ENCODE measurements at regions of chr15 and their contacts with region 1.

Region 1: GRCh38 chr15:52179278-52180195 is 11.7 kb downstream of the GNB5 start:
- DNase-seq: peak; percentile 93
- ATAC-seq: peak; percentile 89
- H3K4me3 Mint-ChIP-seq: peak overlapping the region; percentile 82
- H3K27ac Mint-ChIP-seq: peak overlapping the region; percentile 97
- H3K4me1 Mint-ChIP-seq: peaks cover 22% of the 10 kb centered on the region
- H3K27me3 Mint-ChIP-seq: no peaks in the 10 kb centered on the region

Region 2: DNA sequence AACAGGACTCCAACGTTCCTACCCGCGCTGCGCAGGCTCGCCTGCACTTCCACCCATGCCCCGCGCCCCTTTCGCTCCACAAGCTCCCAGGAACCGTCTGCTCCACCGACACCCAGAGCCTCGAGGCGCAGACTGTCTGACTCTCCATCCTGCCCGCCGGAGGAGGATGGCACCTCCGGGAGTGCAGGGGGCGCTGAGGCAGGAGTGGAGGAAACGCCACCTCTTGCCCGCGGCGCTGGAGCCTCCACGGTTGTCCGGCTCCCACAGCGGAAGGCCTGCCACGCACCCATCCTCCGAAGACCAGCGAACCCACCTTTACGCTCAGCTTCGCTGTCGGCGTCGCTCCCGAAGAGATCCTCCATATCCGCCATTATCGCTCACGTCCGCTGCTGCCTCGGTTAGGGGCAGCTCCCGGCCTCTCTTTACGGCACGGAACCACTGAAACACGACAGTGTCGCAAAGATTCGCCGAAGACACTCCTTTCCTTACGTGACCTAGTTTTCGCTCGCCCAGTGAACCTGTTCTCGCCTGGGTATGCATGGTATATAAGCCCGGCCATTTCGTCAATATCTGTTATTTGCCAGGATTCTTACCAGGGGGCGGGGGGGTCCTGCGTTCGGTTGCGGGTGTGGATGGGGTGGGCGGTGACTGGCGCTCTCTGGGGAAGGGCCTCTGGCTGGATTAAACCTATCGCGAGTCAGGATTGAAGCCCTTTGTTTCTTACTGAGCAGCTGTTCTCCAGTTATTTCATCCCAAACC is 208.0 kb before region 1 on chr15 and contains the start of gene LEO1:
- CTCF ChIA-PET with region 1: interaction called, 6 read pairs
- POLR2A ChIA-PET with region 1: interaction called, 5 read pairs
- intact Hi-C with region 1: loop called (anchors 1 to 5 kb)
- DNase-seq: peak; percentile 93
- ATAC-seq: peak; percentile 95
- H3K4me3 Mint-ChIP-seq: peak within 1 kb of the TSS; percentile 100
- H3K27ac Mint-ChIP-seq: peak within 1 kb of the TSS; percentile 94
- H3K4me1 Mint-ChIP-seq: peaks cover 21% of the 10 kb centered on the region
- H3K27me3 Mint-ChIP-seq: no peaks in the 10 kb centered on the region
- total RNA-seq, gene LEO1: 31.4 to 40.0 TPM

Region 3: GRCh38 chr15:52163321-52164190 is 16.0 kb before region 1 on chr15:
- CTCF ChIA-PET with region 1: interaction called, 10 read pairs
- POLR2A ChIA-PET with region 1: no interaction called
- intact Hi-C with region 1: no loop called
- DNase-seq: peak; percentile 36
- ATAC-seq: peak; percentile 49
- H3K4me3 Mint-ChIP-seq: no peak overlapping the region
- H3K27ac Mint-ChIP-seq: no peak overlapping the region
- H3K4me1 Mint-ChIP-seq: peaks cover 22% of the 10 kb centered on the region
- H3K27me3 Mint-ChIP-seq: no peaks in the 10 kb centered on the region

Region 4: DNA sequence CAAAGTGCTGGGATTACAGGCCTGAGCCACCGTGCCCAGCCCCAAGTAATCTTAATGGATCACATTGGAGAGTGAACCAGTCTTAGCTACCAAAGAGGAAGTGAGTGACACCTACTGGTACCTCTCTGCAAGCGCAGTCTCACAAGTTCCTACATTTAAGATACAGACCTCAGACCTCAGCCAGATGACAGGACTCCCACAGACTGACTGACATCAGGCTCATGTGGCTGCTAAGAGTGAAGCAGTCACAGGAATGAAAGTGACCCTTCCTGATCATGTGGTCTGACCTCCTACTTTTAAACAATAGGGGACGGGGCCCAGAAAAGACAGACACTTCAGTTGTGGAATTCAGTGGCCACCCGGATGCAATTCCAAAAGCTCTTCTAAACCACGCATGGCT is 47.9 kb after region 1 on chr15:
- CTCF ChIA-PET with region 1: interaction called, 23 read pairs
- POLR2A ChIA-PET with region 1: no interaction called
- intact Hi-C with region 1: loop called (anchors 2 to 5 kb)
- DNase-seq: peak; percentile 82
- ATAC-seq: peak; percentile 95
- H3K4me3 Mint-ChIP-seq: no peak overlapping the region
- H3K27ac Mint-ChIP-seq: no peak overlapping the region
- H3K4me1 Mint-ChIP-seq: peaks cover 13% of the 10 kb centered on the region
- H3K27me3 Mint-ChIP-seq: no peaks in the 10 kb centered on the region

Region 5: GRCh38 chr15:52679232-52680040 is 499.9 kb after region 1 on chr15 and contains the start of gene ATOSA:
- CTCF ChIA-PET with region 1: no interaction called
- POLR2A ChIA-PET with region 1: no interaction called
- intact Hi-C with region 1: loop called in 1 of 2 experiments (anchors 2 kb)
- DNase-seq: peak; percentile 95
- ATAC-seq: peak; percentile 85
- H3K4me3 Mint-ChIP-seq: peak within 1 kb of the TSS; percentile 99
- H3K27ac Mint-ChIP-seq: peak within 1 kb of the TSS; percentile 97
- H3K4me1 Mint-ChIP-seq: peaks cover 45% of the 10 kb centered on the region
- H3K27me3 Mint-ChIP-seq: no peaks in the 10 kb centered on the region
- total RNA-seq, gene ATOSA: 13.4 to 13.5 TPM

Measured in activated CD4-positive, alpha-beta T cell treated with anti-CD3 and anti-CD28 coated beads for 36 hours (primary cell).